ENCODE measurements at regions of chr2 and their contacts with region 1.

Region 1: DNA sequence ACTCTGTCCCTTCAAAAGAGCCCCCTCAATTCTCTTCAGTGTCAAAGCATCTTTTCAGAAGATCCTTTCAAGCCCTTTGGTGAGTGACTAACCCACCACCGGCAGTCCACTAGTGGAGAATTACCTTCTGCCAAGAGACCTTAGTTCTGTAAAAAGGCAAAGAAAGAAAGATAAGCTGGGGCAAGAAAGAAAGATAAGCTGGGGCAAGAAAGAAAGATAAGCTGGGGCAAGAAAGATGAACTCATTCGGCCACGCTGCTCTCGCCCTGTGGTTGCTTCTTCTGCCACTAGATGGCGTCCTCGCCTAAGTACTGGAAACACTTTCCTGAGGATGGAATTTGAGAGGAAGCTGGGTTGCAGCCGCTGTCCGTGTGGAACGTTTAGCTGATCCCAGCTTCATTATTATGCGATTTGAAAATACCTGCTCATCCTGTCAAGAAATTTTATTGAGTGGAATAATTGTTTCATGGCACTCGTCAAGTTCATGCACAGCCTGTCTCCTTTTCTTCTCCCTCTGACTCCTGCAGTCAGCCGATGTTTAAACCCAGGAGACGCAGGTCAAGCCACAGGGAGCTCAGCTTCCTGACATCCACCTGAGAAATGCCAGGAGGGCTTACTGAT is 17.3 kb upstream of the ANXA4 start:
- DNase-seq: peak; percentile 74 to 94
- ATAC-seq: peak; percentile 93

Region 2: GRCh38 chr2:69807821-69808540 is 83.3 kb after region 1 on chr2:
- intact Hi-C with region 1: loop called in 1 of 2 experiments (anchors 5 kb)
- DNase-seq: no peak
- ATAC-seq: no peak

Region 3: DNA sequence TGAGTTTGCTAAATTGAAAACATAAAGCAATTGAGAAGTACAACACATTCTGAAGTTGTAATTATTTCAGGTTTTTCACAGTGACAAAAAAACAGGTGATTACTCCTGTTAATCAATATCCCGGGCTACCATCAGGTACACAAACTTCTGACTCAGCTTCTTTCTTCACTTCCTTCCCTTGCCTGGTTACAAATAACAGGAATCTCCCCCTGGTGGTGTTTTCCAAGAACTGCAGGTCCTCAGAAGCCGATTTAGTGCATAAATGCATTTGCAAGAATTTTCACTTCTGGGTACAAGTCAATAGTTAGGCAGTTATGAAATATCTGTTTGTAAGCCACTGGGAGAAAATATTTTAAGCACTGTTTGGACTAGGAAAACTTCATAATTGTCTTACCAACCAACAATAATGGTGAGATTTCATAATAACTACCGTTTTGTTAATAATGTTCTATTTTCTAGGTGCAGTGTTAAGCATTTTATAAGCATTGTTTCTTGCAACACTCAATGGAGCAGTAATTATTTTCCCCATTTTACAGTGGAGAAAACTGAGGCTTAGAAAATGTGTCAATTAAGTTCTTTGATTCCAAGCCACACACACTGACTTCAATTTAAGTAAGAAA is 92.4 kb after region 1 on chr2:
- intact Hi-C with region 1: loop called in 1 of 2 experiments (anchors 5 kb)
- DNase-seq: peak; percentile 66 to 72
- ATAC-seq: peak; percentile 82

Region 4: GRCh38 chr2:70009762-70010575 is 285.3 kb after region 1 on chr2:
- intact Hi-C with region 1: no loop called
- DNase-seq: peak; percentile 80 to 91
- ATAC-seq: peak; percentile 87